Activated CD8-positive, alpha-beta memory T cell treated with anti-CD3 and anti-CD28 coated beads, Interleukin-2, amount 10 ng/mL, durations not matched to agents 7 days and 5 days (primary cell): ENCODE measurements at regions of chr3 and their contacts with region 1.

Region 1: DNA sequence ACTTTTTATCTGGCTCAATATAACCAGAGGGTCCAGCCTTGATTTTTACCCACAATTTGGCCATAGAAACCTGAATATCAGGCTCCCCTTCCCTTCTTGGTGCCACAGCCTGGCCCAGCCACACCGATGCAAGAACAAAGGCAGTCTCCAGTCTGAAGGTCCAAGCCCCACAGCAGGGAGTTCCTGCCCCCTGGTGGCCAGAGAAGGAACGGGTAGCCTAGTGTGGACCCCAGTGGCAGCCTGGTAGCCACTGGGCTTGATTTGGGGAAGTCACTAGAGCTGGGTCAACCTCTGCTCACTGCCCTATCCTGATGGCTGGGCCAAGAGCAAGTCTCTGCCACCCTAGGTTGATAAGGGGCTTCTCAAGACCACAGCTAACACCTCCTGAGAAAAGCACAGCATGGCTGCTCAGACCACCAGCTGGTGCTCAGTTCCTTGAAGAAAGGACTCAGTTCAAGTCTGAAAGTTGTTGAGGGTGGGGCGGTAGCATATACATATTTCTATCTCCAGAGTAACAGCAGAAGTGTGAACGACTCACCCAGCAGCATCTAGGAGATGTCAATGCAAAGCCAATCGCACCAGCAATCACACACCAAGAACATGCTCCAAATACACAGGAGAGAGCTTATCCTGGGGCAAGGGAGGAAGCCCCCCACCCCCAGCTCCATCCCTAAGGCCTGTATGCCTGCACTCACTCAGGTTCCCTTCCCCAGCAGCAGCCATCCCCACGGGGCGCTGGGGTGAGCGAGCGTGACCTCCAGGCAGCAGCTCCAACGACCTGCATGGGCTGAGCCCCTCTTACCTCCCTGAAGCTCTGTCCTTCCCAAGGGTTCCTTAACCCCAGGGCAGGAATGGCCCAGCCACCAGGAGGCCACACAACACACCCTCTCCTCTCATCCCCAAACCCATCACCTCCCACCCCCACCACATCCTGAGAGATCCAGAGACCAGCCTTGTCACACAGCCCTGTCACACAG is 7.6 kb downstream of the PFKFB4 start:
- DNase-seq: peak; percentile 89
- ATAC-seq: peak; percentile 98
- H3K4me3 Mint-ChIP-seq: no peak overlapping the region
- H3K27ac Mint-ChIP-seq: no peak overlapping the region
- H3K4me1 Mint-ChIP-seq: peaks cover 9% of the 10 kb centered on the region
- H3K27me3 Mint-ChIP-seq: no peaks in the 10 kb centered on the region

Region 2: DNA sequence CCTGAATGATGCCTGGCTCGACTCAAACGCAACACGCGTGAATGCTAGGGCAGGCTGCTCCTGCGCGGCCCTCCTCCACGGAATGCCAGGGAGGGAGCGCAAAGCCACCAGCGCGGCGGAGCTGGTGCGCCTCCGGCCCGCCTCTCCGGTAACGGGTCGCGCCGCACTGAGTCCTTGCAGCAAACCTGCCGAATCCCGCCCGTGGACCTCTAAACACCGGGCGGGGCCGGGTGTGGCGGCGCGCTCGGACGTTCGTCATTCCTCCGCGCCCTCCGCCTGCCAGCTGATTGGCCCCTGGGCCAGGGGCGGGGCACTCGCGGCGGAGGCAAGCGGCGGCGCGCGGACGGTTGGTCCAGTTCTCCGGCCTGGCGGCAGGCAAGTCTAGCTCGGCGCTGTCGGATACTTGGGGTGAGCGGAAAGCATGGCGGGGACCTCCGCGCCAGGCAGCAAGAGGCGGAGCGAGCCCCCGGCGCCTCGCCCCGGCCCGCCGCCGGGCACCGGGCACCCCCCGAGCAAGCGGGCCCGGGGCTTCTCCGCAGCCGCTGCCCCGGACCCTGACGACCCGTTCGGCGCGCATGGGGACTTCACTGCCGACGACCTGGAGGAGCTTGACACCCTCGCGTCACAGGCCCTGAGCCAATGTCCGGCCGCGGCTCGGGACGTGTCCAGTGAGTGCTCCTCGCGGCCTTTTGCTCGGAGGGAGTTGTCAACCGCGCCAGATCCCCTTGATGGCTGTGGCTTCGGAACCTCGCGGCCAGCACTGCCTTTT is 102.4 kb before region 1 on chr3 and contains the start of gene ATRIP:
- CTCF ChIA-PET with region 1: interaction called, 15 read pairs
- DNase-seq: peak; percentile 92
- ATAC-seq: peak; percentile 98
- H3K4me3 Mint-ChIP-seq: peak within 1 kb of the TSS; percentile 84
- H3K27ac Mint-ChIP-seq: peak within 1 kb of the TSS; percentile 92
- H3K4me1 Mint-ChIP-seq: peaks cover 51% of the 10 kb centered on the region
- H3K27me3 Mint-ChIP-seq: no peaks in the 10 kb centered on the region
- total RNA-seq, gene ATRIP: 20.9 to 21.2 TPM

Region 3: DNA sequence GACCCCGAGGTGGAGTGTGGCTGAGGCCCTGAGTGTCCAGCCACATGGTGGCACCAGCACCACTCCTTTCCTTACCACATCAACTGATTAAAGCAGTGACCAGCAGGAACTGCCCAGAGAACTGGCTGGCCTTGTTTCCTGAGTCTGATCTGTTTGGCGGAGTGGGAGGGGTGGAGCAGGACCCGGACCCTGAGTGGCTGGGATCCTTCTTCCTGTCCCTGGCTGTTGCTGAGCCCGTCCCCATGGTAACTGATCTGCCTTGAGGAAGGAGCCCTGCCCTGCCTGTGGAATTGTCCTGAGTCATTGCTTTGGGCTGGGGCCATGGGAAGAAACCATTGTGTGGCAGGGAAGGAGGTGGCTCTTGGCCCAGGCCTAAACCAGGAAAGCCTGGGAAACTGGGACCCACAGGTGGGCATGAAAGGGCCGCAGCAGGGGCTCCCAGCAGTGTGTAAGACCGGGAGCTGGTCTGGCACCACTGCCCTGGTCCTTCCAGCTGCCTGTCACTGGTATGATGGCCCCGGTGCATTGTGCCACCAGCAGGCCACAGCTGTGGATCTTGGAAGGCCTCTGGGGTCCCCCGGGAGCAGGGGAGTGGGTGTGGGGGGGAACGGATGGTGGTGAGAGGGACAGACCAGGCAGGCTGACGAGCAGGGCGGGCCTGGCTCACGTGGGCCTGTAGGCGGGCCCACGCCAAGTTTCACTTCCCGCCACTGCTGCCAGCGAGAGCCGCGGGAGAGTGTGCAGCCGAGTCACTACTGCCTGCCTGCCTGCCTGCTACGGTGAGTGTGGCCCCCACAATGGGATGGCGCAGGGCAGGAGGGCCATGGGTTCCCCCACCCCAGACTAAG is 83.3 kb before region 1 on chr3:
- CTCF ChIA-PET with region 1: interaction called, 14 read pairs
- DNase-seq: peak; percentile 91
- ATAC-seq: peak; percentile 93
- H3K4me3 Mint-ChIP-seq: peak overlapping the region; percentile 88
- H3K27ac Mint-ChIP-seq: peak overlapping the region; percentile 99
- H3K4me1 Mint-ChIP-seq: peaks cover 52% of the 10 kb centered on the region
- H3K27me3 Mint-ChIP-seq: no peaks in the 10 kb centered on the region

Region 4: GRCh38 chr3:48472915-48473616 is 76.0 kb before region 1 on chr3:
- CTCF ChIA-PET with region 1: interaction called, 14 read pairs
- DNase-seq: peak; percentile 99
- ATAC-seq: peak; percentile 88
- H3K4me3 Mint-ChIP-seq: peak overlapping the region; percentile 85
- H3K27ac Mint-ChIP-seq: peak overlapping the region; percentile 95
- H3K4me1 Mint-ChIP-seq: peaks cover 73% of the 10 kb centered on the region
- H3K27me3 Mint-ChIP-seq: no peaks in the 10 kb centered on the region

Region 5: DNA sequence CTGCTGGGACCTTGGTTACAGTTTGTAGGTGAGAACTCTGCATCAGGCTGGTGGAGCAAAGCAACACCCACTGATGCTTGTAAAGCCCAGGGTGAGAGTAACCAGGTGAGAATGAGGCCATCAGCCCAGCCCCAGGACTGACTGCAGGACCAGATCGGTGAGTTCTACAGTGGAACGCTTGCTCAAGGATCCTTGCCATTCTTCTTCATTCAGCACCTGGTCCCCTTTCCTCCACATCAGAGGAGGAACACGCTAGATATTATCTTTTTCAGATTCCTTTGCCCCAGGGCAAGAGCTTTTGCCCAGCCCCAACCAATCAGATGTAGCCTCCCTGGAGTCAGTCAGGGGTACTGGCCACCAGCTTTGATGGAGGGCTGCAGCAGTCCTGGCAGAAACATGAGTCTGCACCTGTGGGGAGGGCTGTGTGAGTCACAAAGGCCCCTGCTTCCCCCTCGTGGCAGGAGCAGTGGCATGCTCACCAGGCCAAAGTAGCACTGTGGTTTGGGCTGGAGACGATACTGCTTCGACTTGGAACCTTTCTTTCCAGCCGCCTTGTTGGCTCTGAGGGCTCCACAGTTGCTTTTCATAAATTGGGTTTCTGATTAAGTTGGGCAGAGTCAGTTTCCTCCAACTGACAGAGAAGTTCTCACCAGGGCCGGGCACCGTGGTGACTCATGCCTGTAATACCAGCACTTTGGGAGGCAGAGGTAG is 41.5 kb before region 1 on chr3:
- CTCF ChIA-PET with region 1: interaction called, 13 read pairs
- DNase-seq: peak; percentile 89
- ATAC-seq: peak; percentile 83
- H3K4me3 Mint-ChIP-seq: peak overlapping the region; percentile 16
- H3K27ac Mint-ChIP-seq: peak overlapping the region; percentile 77
- H3K4me1 Mint-ChIP-seq: peaks cover 40% of the 10 kb centered on the region
- H3K27me3 Mint-ChIP-seq: peaks cover 6% of the 10 kb centered on the region

Region 6: GRCh38 chr3:48573973-48574585 is 25.1 kb after region 1 on chr3:
- CTCF ChIA-PET with region 1: no interaction called
- DNase-seq: no peak
- ATAC-seq: no peak
- H3K4me3 Mint-ChIP-seq: no peak overlapping the region
- H3K27ac Mint-ChIP-seq: no peak overlapping the region
- H3K4me1 Mint-ChIP-seq: no peaks in the 10 kb centered on the region
- H3K27me3 Mint-ChIP-seq: no peaks in the 10 kb centered on the region